GM10248 (cell line): ENCODE measurements at regions of chr5 and their contacts with region 1.

Region 1: DNA sequence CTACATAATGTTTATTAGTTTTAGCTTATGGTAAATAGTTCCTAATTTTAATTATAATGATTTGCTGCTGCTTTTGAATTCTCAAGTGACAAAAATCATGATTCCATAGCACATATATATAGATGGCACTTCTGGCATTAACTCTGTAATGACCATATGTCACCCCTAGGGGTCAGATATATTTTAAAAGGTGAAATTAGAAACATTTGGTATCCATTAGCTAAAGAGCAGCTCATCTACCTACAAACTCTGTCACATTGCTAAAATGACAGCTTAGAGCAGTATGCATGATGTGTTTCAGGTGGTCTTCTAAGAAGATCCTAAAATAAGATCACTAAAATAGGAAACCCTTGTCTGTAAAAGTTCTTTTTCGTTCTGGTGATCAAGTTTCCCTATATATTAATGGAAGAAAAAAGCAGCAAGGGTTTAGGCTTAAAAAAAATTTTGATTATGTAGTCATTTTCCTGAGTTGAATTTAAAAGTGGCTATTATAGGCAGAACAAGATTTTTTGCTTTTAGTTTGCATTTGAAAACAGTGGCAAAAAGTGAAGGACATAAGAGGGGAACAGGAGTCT is 157.7 kb upstream of the POU5F2 start:
- DNase-seq: peak; percentile 3
- CTCF ChIP-seq: peak; percentile 26

Region 2: DNA sequence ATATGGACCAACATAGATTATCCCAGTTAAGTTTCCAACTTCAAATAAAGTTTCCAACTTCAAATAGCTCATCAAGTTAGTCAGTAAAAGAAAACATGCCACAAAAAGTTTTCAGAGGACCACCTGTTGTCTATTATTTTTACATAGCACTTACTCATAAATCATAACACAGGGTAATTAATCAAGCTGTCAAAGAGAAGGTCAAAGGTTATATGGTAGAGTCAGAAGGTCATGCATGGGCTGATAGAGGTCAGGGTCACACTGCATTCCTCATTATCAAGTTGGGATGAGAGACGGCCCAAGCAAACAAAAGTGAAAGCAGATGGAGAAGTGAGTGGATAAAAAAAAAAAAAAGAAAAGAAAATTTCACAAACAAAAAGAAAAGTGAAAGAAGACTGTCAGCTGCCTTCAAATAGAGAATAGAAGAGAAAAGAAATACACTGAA is 12.2 kb before region 1 on chr5:
- CTCF ChIA-PET with region 1: interaction called, 11 read pairs
- POLR2A ChIA-PET with region 1: no interaction called
- DNase-seq: no peak
- CTCF ChIP-seq: no peak

Region 3: GRCh38 chr5:93911609-93912008 is 12.5 kb after region 1 on chr5:
- CTCF ChIA-PET with region 1: interaction called, 13 read pairs
- POLR2A ChIA-PET with region 1: no interaction called
- DNase-seq: no peak
- CTCF ChIP-seq: no peak